ENCODE measurements at regions of chr10 and their contacts with region 1.

Region 1: DNA sequence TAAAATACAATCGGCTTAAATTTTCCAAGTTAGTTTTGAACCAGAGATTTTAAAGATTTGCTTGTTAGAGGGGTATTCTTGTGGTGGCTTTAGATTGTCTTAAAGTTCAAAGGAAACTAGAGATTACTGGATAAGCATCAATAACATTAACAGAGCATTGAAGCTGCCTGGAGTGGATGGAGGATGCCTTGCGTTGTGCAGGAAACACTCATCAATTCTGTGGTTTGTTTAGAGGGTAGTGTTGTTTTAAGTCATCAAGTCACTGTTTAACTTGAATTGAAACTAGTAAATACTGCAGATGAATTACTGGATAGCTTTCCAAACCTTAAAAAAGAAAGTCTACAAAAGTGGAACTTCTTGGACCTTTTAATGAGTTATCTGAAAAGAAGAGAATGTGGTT is 218.6 kb downstream of the CELF2 start:
- DNase-seq: no peak
- CTCF ChIP-seq: no peak

Region 2: DNA sequence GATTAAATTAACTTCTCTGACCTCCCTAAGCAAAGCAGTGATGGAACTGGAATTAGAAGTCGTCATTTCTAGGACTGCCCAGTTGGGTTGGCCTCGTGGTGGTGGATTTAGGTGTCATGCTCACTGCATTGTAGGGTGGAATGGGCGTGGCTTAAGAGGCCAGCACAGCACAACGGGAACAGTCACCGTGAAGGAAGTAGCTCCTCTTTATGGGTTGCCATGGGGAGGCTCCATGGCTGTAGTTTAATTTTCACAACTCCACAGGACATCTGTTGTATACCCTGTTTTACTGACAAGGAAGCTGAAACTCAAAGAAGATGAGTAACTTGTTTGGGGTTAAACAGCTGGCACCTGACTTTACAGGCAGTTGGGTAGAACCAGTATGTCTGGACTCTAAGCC is 10.3 kb before region 1 on chr10:
- CTCF ChIA-PET with region 1: interaction called, 25 read pairs
- POLR2A ChIA-PET with region 1: no interaction called
- DNase-seq: no peak
- CTCF ChIP-seq: no peak

Measured in GM10248 (cell line).